ENCODE measurements at regions of chr12 and their contacts with region 1.

Region 1: GRCh38 chr12:53213348-53213747 is 6.3 kb upstream of the ITGB7 start:
- DNase-seq: peak; percentile 89 to 92 (median 89)
- ATAC-seq: peak; percentile 75
- H3K4me3 ChIP-seq: no peak overlapping the region
- H3K4me1 ChIP-seq: peaks cover 29% of the 10 kb centered on the region
- CTCF ChIP-seq: peak; percentile 90

Region 2: DNA sequence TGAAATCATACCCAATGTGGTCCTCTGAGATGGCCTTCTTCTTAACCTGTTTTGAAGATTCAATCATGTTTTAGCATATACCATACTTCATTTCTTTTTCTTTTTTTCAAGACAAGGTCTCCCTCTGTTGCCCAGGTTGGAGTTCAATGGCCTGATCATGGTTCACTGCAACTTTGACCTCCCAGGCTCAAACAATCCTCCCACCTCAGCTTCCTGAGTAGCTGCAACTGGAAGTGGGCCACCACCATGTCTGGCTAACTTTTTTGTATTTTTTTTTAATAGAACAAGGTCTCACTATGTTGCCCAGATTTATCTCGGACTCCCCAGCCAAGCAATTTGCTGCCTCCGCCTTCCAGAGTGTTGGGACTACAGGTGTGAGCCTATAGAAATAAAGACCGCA is 79.6 kb before region 1 on chr12:
- intact Hi-C with region 1: no loop called
- DNase-seq: no peak
- ATAC-seq: no peak
- H3K4me3 ChIP-seq: no peak overlapping the region
- H3K4me1 ChIP-seq: no peaks in the 10 kb centered on the region
- CTCF ChIP-seq: no peak

Region 3: GRCh38 chr12:53251477-53252348 is 38.4 kb after region 1 on chr12:
- intact Hi-C with region 1: loop called in 1 of 2 experiments (anchors 5 kb)
- DNase-seq: peak; percentile 79 to 88 (median 88)
- ATAC-seq: peak; percentile 92
- H3K4me3 ChIP-seq: peak overlapping the region; percentile 81
- H3K4me1 ChIP-seq: peaks cover 13% of the 10 kb centered on the region
- CTCF ChIP-seq: peak; percentile 22

Region 4: DNA sequence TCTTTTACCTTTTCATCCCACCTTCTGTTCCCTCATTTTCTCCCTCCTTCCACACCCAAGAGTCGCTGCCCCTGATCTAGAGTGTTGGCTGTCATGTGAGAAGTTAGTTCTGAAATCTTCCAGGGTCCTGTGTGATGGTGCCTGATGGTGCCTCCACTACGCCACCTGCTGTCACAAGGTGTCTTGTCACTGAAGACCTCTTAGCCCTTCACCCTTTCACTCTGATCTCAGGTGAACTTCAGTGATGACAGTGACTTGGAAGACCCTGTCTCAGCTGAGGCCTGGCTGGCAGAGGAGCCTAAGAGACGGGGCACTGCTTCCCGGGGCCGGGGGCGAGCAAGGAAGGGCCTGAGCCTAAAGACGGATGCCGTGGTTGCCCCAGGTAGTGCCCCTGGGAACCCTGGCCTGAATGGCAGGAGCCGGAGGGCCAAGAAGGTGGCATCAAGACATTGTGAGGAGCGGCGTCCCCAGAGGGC is 74.4 kb after region 1 on chr12:
- intact Hi-C with region 1: loop called in 1 of 2 experiments (anchors 5 kb)
- DNase-seq: peak; percentile 69 to 93 (median 71)
- ATAC-seq: peak; percentile 85
- H3K4me3 ChIP-seq: no peak overlapping the region
- H3K4me1 ChIP-seq: no peaks in the 10 kb centered on the region
- CTCF ChIP-seq: peak; percentile 54

Measured in mucosa of descending colon (tissue), 3 donors.